ENCODE measurements at regions of chr3 and their contacts with region 1.

Region 1: DNA sequence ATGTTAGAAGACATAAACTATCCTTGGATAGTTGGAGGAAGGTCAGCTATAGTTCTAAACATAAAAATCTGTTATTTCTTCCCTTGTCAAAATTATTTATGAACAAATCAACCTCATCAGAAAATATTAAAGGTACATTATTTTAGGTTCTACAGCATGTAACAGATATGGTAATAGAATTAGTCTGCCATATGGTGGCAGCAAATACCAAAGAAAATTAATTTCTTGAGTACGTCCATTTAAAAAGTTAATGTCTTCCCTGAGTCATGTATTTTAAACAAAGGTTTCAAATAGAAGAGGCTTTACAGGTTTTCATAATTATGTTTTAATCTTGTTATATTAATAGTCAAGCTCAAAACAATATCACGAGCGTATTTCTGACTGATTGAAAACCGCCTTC is 17.9 kb upstream of the ANKRD28 start:
- DNase-seq: no peak
- ATAC-seq: no peak
- H3K4me3 ChIP-seq: no peak overlapping the region
- H3K27ac ChIP-seq: no peak overlapping the region
- H3K4me1 ChIP-seq: no peaks in the 10 kb centered on the region
- H3K27me3 ChIP-seq: no peaks in the 10 kb centered on the region

Region 2: GRCh38 chr3:15936312-15936711 is 120.6 kb after region 1 on chr3:
- intact Hi-C with region 1: no loop called
- DNase-seq: no peak
- ATAC-seq: no peak
- H3K4me3 ChIP-seq: no peak overlapping the region
- H3K27ac ChIP-seq: no peak overlapping the region
- H3K4me1 ChIP-seq: no peaks in the 10 kb centered on the region
- H3K27me3 ChIP-seq: no peaks in the 10 kb centered on the region

Region 3: DNA sequence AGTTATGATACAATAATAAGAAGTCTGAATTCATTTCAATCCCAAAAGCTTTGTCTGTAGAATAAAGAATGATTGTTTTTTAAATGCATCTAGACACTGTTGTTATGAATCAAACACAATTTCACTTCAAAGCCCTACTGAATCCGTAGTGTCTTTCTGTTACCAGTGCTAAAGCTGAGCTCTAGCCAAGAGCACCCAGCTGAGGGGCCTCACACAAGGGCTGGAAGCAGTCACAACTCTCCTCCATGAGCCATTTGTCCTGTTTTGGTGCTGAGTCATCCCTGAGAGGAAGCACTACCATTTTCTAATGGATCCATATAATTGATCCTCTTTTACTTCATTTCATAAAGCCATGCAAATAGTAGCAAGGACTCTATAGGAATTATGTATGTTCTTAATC is 140.3 kb after region 1 on chr3:
- intact Hi-C with region 1: no loop called
- DNase-seq: no peak
- ATAC-seq: no peak
- H3K4me3 ChIP-seq: no peak overlapping the region
- H3K27ac ChIP-seq: no peak overlapping the region
- H3K4me1 ChIP-seq: no peaks in the 10 kb centered on the region
- H3K27me3 ChIP-seq: no peaks in the 10 kb centered on the region

Region 4: GRCh38 chr3:16048435-16049318 is 233.0 kb after region 1 on chr3:
- intact Hi-C with region 1: loop called (anchors 5 to 10 kb)
- DNase-seq: no peak
- ATAC-seq: peak; percentile 87
- H3K4me3 ChIP-seq: no peak overlapping the region
- H3K27ac ChIP-seq: no peak overlapping the region
- H3K4me1 ChIP-seq: no peaks in the 10 kb centered on the region
- H3K27me3 ChIP-seq: no peaks in the 10 kb centered on the region

Measured in aorta (tissue), 5 donors.